ENCODE measurements at regions of chr3 and their contacts with region 1.

Region 1: DNA sequence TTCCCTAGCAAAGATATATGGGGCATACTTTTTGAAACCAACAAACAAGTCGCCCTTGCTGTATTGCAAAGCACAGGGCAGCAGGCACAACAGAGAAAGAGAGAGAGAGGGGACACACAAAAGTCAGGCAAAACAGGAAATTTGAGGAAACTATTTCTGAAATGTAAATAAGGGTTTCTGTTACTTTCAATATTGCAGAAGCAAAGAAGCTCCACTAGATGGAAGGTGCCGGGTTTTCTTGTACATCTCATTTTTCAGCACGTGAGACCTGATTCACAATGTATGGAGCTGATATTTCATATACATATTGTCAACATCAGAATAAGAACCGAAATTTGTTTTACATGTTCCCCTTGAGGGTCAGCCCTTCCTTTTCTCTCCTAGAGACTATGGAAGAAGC is 127.4 kb downstream of the FOXP1 start:
- DNase-seq: peak; percentile 62
- ATAC-seq: peak; percentile 54
- H3K4me3 ChIP-seq: peak overlapping the region; percentile 9 to 53 (median 48)
- H3K4me3 Mint-ChIP-seq: peak overlapping the region; percentile 83
- H3K27ac ChIP-seq: peak overlapping the region; percentile 80 to 86
- H3K27ac Mint-ChIP-seq: peak overlapping the region; percentile 94
- H3K4me1 ChIP-seq: peaks cover 70 to 77% of the 10 kb centered on the region in 2 donors
- H3K4me1 Mint-ChIP-seq: peaks cover 76% of the 10 kb centered on the region
- H3K27me3 ChIP-seq: no peaks in the 10 kb centered on the region
- H3K27me3 Mint-ChIP-seq: no peaks in the 10 kb centered on the region
- CTCF ChIP-seq: peak; percentile 20

Region 2: GRCh38 chr3:71317749-71318457 is 138.3 kb before region 1 on chr3:
- CTCF ChIA-PET with region 1: no interaction called
- POLR2A ChIA-PET with region 1: no interaction called
- intact Hi-C with region 1: no loop called
- DNase-seq: no peak
- ATAC-seq: no peak
- H3K4me3 ChIP-seq: no peak overlapping the region
- H3K4me3 Mint-ChIP-seq: peak overlapping the region; percentile 52
- H3K27ac ChIP-seq: peak overlapping the region in 1 of 2 donors; percentile 51
- H3K27ac Mint-ChIP-seq: no peak overlapping the region
- H3K4me1 ChIP-seq: peaks cover 37 to 45% of the 10 kb centered on the region in 2 donors
- H3K4me1 Mint-ChIP-seq: peaks cover 36% of the 10 kb centered on the region
- H3K27me3 ChIP-seq: no peaks in the 10 kb centered on the region
- H3K27me3 Mint-ChIP-seq: no peaks in the 10 kb centered on the region
- CTCF ChIP-seq: no peak

Region 3: DNA sequence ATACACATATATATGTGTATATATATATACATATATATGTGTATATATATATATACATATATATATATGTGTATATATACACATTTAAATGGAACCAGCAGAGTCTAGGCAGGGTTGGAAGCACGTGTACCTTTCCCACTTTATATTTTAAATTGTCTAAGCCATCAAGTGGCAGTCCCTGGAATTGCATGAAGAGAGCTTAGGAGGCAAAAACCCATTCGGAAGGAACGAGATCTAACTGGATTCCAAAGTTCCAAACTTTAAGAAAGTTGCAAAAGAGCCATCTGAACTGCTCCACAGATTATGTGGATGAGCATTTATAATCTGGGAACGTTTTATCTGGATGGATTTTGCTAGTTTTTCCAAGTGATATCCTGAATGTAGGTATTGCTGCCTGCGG is 59.1 kb before region 1 on chr3:
- CTCF ChIA-PET with region 1: interaction called, 3 read pairs
- POLR2A ChIA-PET with region 1: interaction called, 10 read pairs
- intact Hi-C with region 1: no loop called
- DNase-seq: peak; percentile 47
- ATAC-seq: no peak
- H3K4me3 ChIP-seq: no peak overlapping the region
- H3K4me3 Mint-ChIP-seq: peak overlapping the region; percentile 62
- H3K27ac ChIP-seq: peak overlapping the region; percentile 58 to 82
- H3K27ac Mint-ChIP-seq: no peak overlapping the region
- H3K4me1 ChIP-seq: peaks cover 69 to 88% of the 10 kb centered on the region in 2 donors
- H3K4me1 Mint-ChIP-seq: peaks cover 77% of the 10 kb centered on the region
- H3K27me3 ChIP-seq: no peaks in the 10 kb centered on the region
- H3K27me3 Mint-ChIP-seq: no peaks in the 10 kb centered on the region
- CTCF ChIP-seq: peak; percentile 44

Region 4: DNA sequence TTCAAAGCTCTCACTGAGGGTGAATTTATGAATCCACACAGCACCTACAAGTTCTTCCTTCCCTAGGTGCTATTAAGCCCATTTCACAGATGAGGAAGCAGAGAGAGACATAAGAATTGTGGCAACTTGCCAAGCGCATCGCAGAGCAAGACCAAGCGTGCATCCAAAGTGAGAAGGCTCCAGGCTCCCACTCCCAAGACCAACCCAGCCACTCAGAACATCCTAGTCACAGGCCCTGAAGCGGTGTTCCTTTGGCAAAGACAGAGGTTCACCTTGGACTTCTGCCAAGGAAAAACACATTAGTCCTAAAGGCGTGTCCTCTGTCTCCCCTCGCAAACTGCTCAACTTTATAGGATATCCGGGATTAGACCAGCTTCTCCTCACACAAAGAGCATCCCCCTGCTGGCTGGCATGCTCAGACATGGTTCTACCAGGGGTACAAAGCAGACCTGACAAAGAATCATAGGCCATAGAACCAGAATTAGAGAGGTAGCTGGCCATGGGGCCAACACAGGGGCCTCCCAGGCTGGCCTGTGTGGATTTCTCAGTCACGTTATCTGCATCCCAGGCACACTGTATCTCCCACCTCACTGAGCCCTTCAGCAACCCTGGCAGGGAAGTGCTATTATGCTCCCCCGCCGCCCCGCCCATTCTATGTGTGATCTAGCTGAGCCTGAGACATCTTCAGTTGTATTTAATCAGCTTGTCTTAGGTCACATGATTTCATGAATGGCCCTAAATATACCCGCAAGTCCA is 32.8 kb before region 1 on chr3:
- CTCF ChIA-PET with region 1: no interaction called
- POLR2A ChIA-PET with region 1: interaction called, 4 read pairs
- intact Hi-C with region 1: loop called (anchors 5 kb)
- DNase-seq: no peak
- ATAC-seq: no peak
- H3K4me3 ChIP-seq: no peak overlapping the region
- H3K4me3 Mint-ChIP-seq: peak overlapping the region; percentile 81
- H3K27ac ChIP-seq: peak overlapping the region; percentile 98
- H3K27ac Mint-ChIP-seq: peak overlapping the region; percentile 99
- H3K4me1 ChIP-seq: peaks cover 79 to 82% of the 10 kb centered on the region in 2 donors
- H3K4me1 Mint-ChIP-seq: peaks cover 84% of the 10 kb centered on the region
- H3K27me3 ChIP-seq: no peaks in the 10 kb centered on the region
- H3K27me3 Mint-ChIP-seq: no peaks in the 10 kb centered on the region
- CTCF ChIP-seq: no peak

Region 5: GRCh38 chr3:71466483-71466882 is 10.3 kb after region 1 on chr3:
- CTCF ChIA-PET with region 1: interaction called, 4 read pairs
- POLR2A ChIA-PET with region 1: no interaction called
- intact Hi-C with region 1: loop called (anchors 2 kb)
- DNase-seq: no peak
- ATAC-seq: no peak
- H3K4me3 ChIP-seq: no peak overlapping the region
- H3K4me3 Mint-ChIP-seq: no peak overlapping the region
- H3K27ac ChIP-seq: no peak overlapping the region
- H3K27ac Mint-ChIP-seq: no peak overlapping the region
- H3K4me1 ChIP-seq: peaks cover 15 to 18% of the 10 kb centered on the region in 2 donors
- H3K4me1 Mint-ChIP-seq: peaks cover 36% of the 10 kb centered on the region
- H3K27me3 ChIP-seq: no peaks in the 10 kb centered on the region
- H3K27me3 Mint-ChIP-seq: no peaks in the 10 kb centered on the region
- CTCF ChIP-seq: no peak

Region 6: GRCh38 chr3:71478568-71478967 is 22.4 kb after region 1 on chr3:
- CTCF ChIA-PET with region 1: no interaction called
- POLR2A ChIA-PET with region 1: no interaction called
- intact Hi-C with region 1: no loop called
- DNase-seq: peak; percentile 30
- ATAC-seq: peak; percentile 76
- H3K4me3 ChIP-seq: no peak overlapping the region
- H3K4me3 Mint-ChIP-seq: peak overlapping the region; percentile 19
- H3K27ac ChIP-seq: peak overlapping the region in 1 of 2 donors; percentile 7
- H3K27ac Mint-ChIP-seq: peak overlapping the region; percentile 76
- H3K4me1 ChIP-seq: peaks cover 23 to 30% of the 10 kb centered on the region in 2 donors
- H3K4me1 Mint-ChIP-seq: peaks cover 50% of the 10 kb centered on the region
- H3K27me3 ChIP-seq: no peaks in the 10 kb centered on the region
- H3K27me3 Mint-ChIP-seq: no peaks in the 10 kb centered on the region
- CTCF ChIP-seq: no peak

Region 7: GRCh38 chr3:71492974-71493771 is 37.0 kb after region 1 on chr3:
- CTCF ChIA-PET with region 1: no interaction called
- POLR2A ChIA-PET with region 1: interaction called, 3 read pairs
- intact Hi-C with region 1: loop called (anchors 5 kb)
- DNase-seq: peak; percentile 47
- ATAC-seq: peak; percentile 39
- H3K4me3 ChIP-seq: no peak overlapping the region
- H3K4me3 Mint-ChIP-seq: peak overlapping the region; percentile 49
- H3K27ac ChIP-seq: peak overlapping the region; percentile 46 to 80
- H3K27ac Mint-ChIP-seq: peak overlapping the region; percentile 82
- H3K4me1 ChIP-seq: peaks cover 40% of the 10 kb centered on the region in 2 donors
- H3K4me1 Mint-ChIP-seq: peaks cover 67% of the 10 kb centered on the region
- H3K27me3 ChIP-seq: no peaks in the 10 kb centered on the region
- H3K27me3 Mint-ChIP-seq: no peaks in the 10 kb centered on the region
- CTCF ChIP-seq: no peak